WTC11 (cell line): ENCODE measurements at regions of chr10 and their contacts with region 1.

Region 1: GRCh38 chr10:101467286-101467770 is 113.4 kb downstream of the BTRC start:
- DNase-seq: no peak
- ATAC-seq: peak; percentile 81
- H3K4me3 Mint-ChIP-seq: no peak overlapping the region
- H3K27ac Mint-ChIP-seq: no peak overlapping the region
- H3K4me1 Mint-ChIP-seq: peaks cover 28% of the 10 kb centered on the region
- H3K27me3 Mint-ChIP-seq: no peaks in the 10 kb centered on the region
- CTCF ChIP-seq: peak; percentile 61

Region 2: GRCh38 chr10:101291331-101292193 is 175.8 kb before region 1 on chr10:
- CTCF ChIA-PET with region 1: interaction called, 33 read pairs
- POLR2A ChIA-PET with region 1: no interaction called
- DNase-seq: peak; percentile 87
- ATAC-seq: peak; percentile 65
- H3K4me3 Mint-ChIP-seq: peak overlapping the region; percentile 80
- H3K27ac Mint-ChIP-seq: no peak overlapping the region
- H3K4me1 Mint-ChIP-seq: peaks cover 39% of the 10 kb centered on the region
- H3K27me3 Mint-ChIP-seq: peaks cover 97% of the 10 kb centered on the region
- CTCF ChIP-seq: peak; percentile 80

Region 3: DNA sequence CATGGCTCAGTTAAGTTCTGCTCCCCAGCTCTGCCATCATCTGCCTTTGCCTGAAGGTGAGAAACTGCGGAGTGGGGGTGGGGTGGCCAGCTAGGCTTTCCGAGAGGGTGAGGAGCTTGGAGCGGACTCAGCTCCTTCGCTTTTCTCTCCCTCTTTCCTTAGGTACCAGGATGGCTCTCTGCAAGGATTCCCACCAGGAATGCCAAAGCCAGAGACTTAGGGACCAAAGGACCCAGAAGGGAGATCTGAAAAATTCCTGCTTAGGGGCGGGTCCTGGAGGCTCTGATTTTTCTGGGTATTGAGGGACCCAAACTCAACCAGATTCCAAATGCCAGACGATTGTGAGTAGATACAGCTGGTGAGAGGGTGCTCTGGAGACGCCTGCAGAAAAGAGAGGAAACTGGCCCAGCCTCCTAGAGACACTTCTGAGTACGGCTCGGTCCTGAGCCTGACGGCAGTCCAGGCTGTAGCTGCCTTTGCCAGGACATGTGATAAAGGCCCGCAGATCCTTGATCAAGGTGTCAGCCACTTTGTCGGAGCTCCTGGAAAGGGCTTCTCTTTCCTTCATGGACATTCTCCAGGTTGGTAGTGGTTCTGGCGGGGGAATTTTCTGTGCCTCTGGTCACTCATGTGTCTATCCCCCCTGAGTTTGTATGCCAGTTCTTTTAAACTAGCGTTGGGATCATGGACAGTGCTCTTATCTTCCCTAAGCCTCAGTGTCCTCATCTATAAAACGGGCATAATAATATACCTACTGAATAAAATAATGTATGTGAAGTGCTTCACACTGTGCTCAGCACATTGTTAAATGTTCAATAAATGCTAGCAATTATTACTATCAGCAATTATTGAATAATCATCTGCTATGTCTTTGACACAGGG is 155.9 kb before region 1 on chr10:
- CTCF ChIA-PET with region 1: interaction called, 15 read pairs
- POLR2A ChIA-PET with region 1: no interaction called
- DNase-seq: peak; percentile 74
- ATAC-seq: peak; percentile 85
- H3K4me3 Mint-ChIP-seq: peak overlapping the region; percentile 52
- H3K27ac Mint-ChIP-seq: peak overlapping the region; percentile 50; the same call in 1 of the 2 replicates
- H3K4me1 Mint-ChIP-seq: peaks cover 23% of the 10 kb centered on the region
- H3K27me3 Mint-ChIP-seq: peaks cover 6% of the 10 kb centered on the region; the same call in 1 of the 2 replicates
- CTCF ChIP-seq: no peak

Region 4: DNA sequence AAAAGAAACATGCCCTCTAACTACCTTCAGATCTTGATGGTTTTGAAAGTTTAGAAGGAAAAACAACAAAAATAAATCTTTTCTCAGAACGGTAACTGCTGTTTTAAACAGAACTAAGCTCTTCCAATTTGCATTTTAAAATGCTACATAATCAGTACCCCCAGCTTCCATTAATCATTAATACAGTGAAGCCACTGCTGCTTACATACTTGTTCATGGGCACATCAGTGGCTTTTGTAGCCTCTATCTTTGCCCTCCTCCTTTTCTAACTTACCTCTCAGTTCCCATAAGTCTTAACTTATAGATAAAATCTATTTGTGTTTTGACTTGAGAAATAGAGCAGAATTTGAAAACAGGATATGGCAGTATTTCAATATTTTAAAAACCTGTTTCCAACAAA is 11.6 kb after region 1 on chr10:
- CTCF ChIA-PET with region 1: interaction called, 47 read pairs
- POLR2A ChIA-PET with region 1: interaction called, 3 read pairs
- DNase-seq: no peak
- ATAC-seq: no peak
- H3K4me3 Mint-ChIP-seq: no peak overlapping the region
- H3K27ac Mint-ChIP-seq: no peak overlapping the region
- H3K4me1 Mint-ChIP-seq: peaks cover under 1% of the 10 kb centered on the region; the same call in 1 of the 2 replicates
- H3K27me3 Mint-ChIP-seq: no peaks in the 10 kb centered on the region
- CTCF ChIP-seq: no peak

Region 5: DNA sequence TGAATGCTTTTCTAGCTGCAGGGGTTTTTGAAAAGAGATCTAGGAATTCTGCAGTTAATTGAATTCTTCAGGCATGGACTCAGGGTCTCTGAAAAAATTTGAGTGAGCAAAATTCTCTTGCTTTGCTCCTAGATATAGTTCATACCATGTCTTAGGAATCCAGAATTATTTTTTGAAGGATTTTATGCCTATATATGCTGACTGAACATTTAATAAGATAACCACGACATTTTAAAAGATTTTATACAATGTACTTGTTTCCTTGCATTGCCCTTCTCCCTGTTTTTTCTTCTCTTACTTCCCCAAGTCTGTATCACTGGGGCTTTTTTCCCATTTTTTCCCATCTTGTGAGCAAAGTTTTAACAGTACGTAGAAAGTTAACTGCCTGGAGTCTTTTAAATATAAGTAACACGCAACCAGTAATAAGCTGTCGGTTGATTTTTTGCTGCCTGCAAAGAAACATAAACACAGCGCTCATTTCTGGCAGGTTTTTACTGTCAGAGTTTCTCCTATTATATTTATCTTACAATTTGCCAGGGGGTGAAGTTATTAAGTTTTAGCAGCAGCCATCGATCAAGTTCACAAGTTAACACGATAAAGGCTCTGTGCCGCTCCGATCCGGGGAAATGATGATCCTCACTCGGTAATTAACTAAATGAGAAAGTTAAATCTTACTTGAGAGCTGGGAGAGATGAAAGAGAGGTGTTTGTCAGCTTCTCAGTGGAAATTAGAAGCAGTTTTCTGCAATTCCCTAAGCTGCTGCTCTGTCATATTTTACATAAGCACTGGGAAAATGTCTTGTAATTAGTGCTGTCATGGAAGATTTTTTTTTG is 39.7 kb after region 1 on chr10:
- CTCF ChIA-PET with region 1: interaction called, 10 read pairs
- POLR2A ChIA-PET with region 1: no interaction called
- DNase-seq: no peak
- ATAC-seq: no peak
- H3K4me3 Mint-ChIP-seq: no peak overlapping the region
- H3K27ac Mint-ChIP-seq: no peak overlapping the region
- H3K4me1 Mint-ChIP-seq: peaks cover 13% of the 10 kb centered on the region; the same call in 1 of the 2 replicates
- H3K27me3 Mint-ChIP-seq: no peaks in the 10 kb centered on the region
- CTCF ChIP-seq: no peak